ENCODE measurements at regions of chr11 and their contacts with region 1.

Region 1: GRCh38 chr11:82900277-82901164 is at the start of gene PRCP:
- DNase-seq: peak; percentile 61
- H3K4me3 ChIP-seq: peak within 1 kb of the TSS; percentile 87
- H3K27ac ChIP-seq: peak within 1 kb of the TSS; percentile 74
- H3K27me3 ChIP-seq: no peaks in the 10 kb centered on the region
- CTCF ChIP-seq: 0 out of 2 replicates have a peak, but pooled peaks have one; percentile 1
- polyA plus RNA-seq, gene PRCP: 128 and 157 TPM in 2 replicates

Region 2: GRCh38 chr11:83071567-83072349 is 171.2 kb after region 1 on chr11 and contains the start of gene RAB30:
- CTCF ChIA-PET with region 1: interaction called, 3 read pairs
- POLR2A ChIA-PET with region 1: interaction called, 12 read pairs
- DNase-seq: peak; percentile 99
- H3K4me3 ChIP-seq: peak within 1 kb of the TSS; percentile 93
- H3K27ac ChIP-seq: peak within 1 kb of the TSS; percentile 89
- H3K27me3 ChIP-seq: no peaks in the 10 kb centered on the region
- CTCF ChIP-seq: no peak
- polyA plus RNA-seq, gene RAB30: 9.3 and 11.8 TPM in 2 replicates

Measured in AG04450 (cell line).